Activated CD4-positive, alpha-beta T cell treated with anti-CD3 and anti-CD28 coated beads for 36 hours (primary cell): ENCODE measurements at regions of chr16 and their contacts with region 1.

Region 1: DNA sequence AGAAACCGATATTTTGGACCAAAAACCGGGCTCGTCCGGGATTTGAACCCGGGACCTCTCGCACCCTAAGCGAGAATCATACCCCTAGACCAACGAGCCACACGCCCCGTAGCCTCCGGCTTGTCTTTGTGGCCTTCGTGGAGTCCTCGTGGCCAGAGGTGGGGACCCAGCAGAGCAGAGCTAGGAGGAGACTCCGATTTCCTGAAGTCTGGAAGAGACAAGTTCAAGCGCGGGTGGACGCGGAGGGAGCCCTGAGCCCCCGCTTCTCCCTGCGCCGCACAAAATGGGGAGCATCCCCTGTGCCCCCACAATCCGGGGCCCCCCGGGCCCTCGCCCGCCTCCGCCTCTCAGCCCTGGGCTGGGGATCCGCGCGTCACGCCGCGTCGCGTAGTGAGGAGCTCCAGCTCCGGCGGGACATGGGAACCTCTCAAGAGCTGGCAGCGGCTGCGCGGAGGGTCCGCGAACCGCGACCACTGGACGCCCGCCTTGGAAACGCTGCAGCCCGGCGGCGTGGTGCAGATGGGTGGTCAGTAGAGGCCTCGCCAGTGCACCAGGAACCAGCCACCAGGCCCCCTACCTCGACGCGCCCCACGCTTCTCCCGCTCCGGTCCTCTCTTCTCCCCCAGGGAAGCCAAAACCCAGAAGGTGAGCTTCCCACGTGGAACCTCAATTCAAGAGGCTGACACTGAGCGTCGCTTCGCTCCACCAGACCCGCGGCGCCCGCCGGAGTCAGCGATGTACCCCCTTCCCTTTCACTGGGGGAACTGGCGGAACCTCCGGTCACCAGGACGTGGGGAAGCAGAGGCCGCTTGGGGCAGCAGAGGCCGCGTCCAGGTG is 5.2 kb upstream of the OR1F1 start:
- DNase-seq: peak; percentile 77
- ATAC-seq: peak; percentile 51
- H3K4me3 Mint-ChIP-seq: peak overlapping the region; percentile 60
- H3K27ac Mint-ChIP-seq: peak overlapping the region; percentile 79
- H3K4me1 Mint-ChIP-seq: peaks cover 24% of the 10 kb centered on the region
- H3K27me3 Mint-ChIP-seq: peaks cover 69% of the 10 kb centered on the region

Region 2: DNA sequence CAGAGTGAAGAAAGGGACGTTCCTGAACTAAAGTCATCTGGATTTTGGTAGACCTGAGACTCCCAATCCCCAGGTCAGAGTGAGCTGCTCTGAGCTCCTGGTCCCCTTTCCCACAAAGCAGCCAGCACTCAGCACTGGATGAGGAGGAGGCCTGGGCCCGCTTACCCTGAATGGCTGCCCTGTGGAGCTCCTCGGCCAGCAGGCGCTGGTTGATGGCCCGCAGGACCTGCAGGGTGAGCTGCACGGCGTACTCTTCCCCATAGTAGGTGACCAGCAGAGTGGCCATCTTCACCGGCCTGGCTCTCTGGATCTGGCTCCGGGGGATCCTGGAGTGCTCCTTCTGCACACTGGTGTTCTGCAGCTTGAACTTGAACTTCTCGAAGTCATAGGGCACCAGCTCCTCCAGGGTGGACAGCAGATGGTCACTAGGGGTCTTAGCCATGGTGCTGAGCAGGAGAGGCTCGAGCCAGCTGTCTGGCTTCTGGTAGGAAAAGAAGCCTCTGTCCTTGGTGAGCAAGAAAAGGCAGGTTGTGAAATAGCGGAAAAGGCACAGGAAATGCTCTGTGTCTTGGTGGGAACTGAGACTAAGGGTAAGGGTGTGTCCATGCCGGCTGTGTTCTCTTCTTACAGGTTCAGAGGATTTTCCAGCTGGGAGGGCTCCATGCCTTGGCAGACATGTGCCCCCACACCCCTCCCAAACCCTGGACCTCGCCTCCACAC is 73.5 kb after region 1 on chr16 and contains the start of gene MEFV:
- CTCF ChIA-PET with region 1: no interaction called
- POLR2A ChIA-PET with region 1: no interaction called
- intact Hi-C with region 1: no loop called
- DNase-seq: no peak
- ATAC-seq: no peak
- H3K4me3 Mint-ChIP-seq: no peak within 1 kb of the TSS
- H3K27ac Mint-ChIP-seq: no peak within 1 kb of the TSS
- H3K4me1 Mint-ChIP-seq: no peaks in the 10 kb centered on the region
- H3K27me3 Mint-ChIP-seq: no peaks in the 10 kb centered on the region
- total RNA-seq, gene MEFV: 0.09 to 0.14 TPM

Region 3: GRCh38 chr16:3509470-3509928 is 326.7 kb after region 1 on chr16:
- CTCF ChIA-PET with region 1: no interaction called
- POLR2A ChIA-PET with region 1: no interaction called
- intact Hi-C with region 1: loop called in 1 of 2 experiments (anchors 2 kb)
- DNase-seq: peak; percentile 92
- ATAC-seq: peak; percentile 86
- H3K4me3 Mint-ChIP-seq: peak overlapping the region; percentile 8
- H3K27ac Mint-ChIP-seq: peak overlapping the region; percentile 91
- H3K4me1 Mint-ChIP-seq: peaks cover 54% of the 10 kb centered on the region
- H3K27me3 Mint-ChIP-seq: no peaks in the 10 kb centered on the region

Region 4: DNA sequence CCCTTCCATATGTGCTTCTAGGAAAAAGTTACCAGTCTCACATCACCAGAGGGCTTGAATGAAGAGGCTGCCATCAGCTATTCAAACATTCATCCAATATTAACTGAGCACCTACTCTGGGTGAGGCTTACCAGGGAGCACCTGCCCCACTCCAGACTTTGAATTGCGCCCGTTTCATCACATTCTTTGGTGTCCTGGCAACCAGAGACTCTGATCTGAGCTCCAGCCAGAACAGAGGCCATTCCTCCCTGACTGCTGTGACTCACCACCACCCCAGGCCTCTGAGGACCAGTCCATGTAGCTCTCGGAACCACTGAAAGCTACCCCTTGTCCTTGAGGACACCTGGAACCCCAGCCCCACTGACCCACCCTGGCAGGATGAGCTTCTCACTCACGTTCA is 1373.3 kb after region 1 on chr16 and contains the start of gene C16orf96:
- CTCF ChIA-PET with region 1: no interaction called
- POLR2A ChIA-PET with region 1: interaction called, 13 read pairs
- intact Hi-C with region 1: no loop called
- DNase-seq: no peak
- ATAC-seq: no peak
- H3K4me3 Mint-ChIP-seq: no peak within 1 kb of the TSS
- H3K27ac Mint-ChIP-seq: no peak within 1 kb of the TSS
- H3K4me1 Mint-ChIP-seq: no peaks in the 10 kb centered on the region
- H3K27me3 Mint-ChIP-seq: no peaks in the 10 kb centered on the region
- total RNA-seq, gene C16orf96: 0.09 to 0.18 TPM